Right cardiac atrium (tissue), 5 donors: ENCODE measurements at regions of chr11 and their contacts with region 1.

Region 1: DNA sequence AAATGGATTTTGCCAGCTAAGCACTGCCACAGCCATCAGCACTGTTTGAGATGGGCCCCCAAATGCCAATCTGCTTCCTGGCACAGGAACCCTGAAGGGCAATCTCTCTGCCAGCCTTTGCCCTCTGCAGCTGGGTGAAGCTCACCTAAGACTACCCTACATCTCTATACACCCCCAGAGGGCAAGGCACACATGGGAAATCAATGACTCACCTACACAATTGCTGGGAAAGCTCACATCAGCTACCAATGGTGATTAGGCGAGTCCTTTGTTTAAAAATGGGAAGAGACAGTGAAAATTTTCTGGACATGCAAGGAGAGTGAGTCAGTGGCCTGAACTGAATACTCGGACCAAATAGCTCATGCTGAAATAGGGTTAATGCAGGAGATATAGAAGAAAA is 12.6 kb upstream of the PRDM11 start:
- DNase-seq: no peak
- ATAC-seq: no peak
- H3K4me3 ChIP-seq: no peak overlapping the region
- H3K27ac ChIP-seq: no peak overlapping the region
- H3K4me1 ChIP-seq: no peaks in the 10 kb centered on the region
- H3K27me3 ChIP-seq: no peaks in the 10 kb centered on the region

Region 2: DNA sequence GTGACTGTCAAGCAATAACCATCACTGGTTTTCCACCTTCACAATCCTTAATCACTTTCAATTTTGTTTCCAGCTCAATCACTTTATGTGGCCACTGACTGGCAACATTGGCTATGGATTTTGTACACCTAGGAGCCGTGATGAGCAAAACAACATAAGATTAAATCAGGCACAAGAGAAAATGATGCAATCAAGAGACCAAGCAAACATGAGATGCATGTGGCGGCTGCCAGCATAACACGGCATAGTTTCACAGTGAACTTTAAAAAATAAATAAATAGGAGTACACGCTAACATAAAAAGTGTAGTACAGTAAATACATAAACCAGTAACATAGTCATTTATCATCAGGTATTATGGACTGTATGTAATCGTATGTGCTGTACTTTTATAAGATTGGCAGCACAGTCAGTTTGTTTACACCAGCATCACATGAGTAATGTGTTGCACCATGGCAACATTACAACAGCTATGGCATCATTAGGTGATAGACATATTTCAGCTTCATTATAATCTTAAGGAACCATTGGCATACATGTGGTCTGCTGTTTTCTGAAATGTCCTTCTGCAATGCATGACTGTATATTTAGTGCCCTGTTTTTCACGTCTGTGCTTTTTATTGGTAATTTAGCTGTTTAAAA is 70.8 kb before region 1 on chr11:
- intact Hi-C with region 1: loop called in 1 of 4 experiments (anchors 10 kb)
- DNase-seq: no peak
- ATAC-seq: no peak
- H3K4me3 ChIP-seq: no peak overlapping the region
- H3K27ac ChIP-seq: no peak overlapping the region
- H3K4me1 ChIP-seq: no peaks in the 10 kb centered on the region
- H3K27me3 ChIP-seq: no peaks in the 10 kb centered on the region